CD8-positive, alpha-beta T cell (primary cell): ENCODE measurements at regions of chr11 and their contacts with region 1.

Region 1: DNA sequence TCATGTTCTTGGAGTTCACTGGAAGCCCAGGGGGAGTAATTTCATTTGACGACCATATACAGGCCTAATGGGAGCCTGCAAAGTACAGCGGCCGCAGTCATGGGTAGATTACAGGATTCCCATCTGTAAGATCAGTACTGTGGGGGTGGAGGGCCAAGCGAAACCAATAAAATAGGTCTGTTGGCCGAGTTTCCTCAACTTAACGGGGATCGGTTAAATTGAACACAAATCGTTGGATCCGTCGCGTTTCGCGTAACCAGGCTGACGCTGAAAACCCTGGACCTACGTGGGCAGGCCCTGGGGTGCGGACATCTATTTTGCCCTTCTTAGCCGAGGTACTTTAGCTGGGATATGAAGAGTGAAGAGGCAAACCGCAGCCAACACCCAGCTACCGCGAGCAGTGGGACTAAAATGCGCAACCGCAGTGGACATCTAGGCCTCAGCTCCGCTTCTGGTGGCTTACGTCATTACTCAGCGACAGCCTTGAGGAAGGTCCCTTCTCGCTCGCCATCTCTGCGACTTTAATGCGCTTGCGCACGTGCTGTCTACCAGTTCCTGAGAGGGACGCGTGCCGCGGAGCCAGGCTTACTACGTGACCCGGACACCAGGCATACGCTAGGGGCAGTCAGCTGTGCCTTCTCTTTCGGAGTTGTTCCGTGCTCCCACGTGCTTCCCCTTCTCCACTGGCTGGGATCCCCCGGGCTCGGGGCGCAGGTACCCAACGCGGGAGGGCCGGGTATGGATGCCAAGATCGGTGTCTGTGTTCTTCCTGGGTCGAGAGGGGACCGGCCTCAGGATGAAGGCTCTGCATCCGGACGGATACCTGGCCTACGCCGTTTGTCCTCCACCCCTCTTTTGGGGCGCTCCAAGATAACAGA is at the start of gene NAT10:
- DNase-seq: peak; percentile 93 to 100 (median 98)
- ATAC-seq: peak; percentile 93
- H3K4me3 ChIP-seq: peak within 1 kb of the TSS; percentile 70 to 94
- H3K4me3 Mint-ChIP-seq: peak within 1 kb of the TSS; percentile 97
- H3K27ac ChIP-seq: peak within 1 kb of the TSS; percentile 81 to 90
- H3K27ac Mint-ChIP-seq: peak within 1 kb of the TSS; percentile 99
- H3K4me1 ChIP-seq: peaks cover 27% of the 10 kb centered on the region
- H3K4me1 Mint-ChIP-seq: peaks cover 60% of the 10 kb centered on the region
- H3K27me3 ChIP-seq: no peaks in the 10 kb centered on the region
- H3K27me3 Mint-ChIP-seq: no peaks in the 10 kb centered on the region
- CTCF ChIP-seq: no peak
- total RNA-seq, gene NAT10: 51.1 to 59.6 TPM

Region 2: GRCh38 chr11:33039274-33040032 is 1065.9 kb before region 1 on chr11 and contains the start of gene TCP11L1:
- CTCF ChIA-PET with region 1: no interaction called
- POLR2A ChIA-PET with region 1: no interaction called
- intact Hi-C with region 1: loop called in 1 of 2 experiments (anchors 10 kb)
- DNase-seq: peak; percentile 60 to 89 (median 83)
- ATAC-seq: peak; percentile 81
- H3K4me3 ChIP-seq: peak within 1 kb of the TSS; percentile 98
- H3K4me3 Mint-ChIP-seq: peak within 1 kb of the TSS; percentile 95
- H3K27ac ChIP-seq: peak within 1 kb of the TSS; percentile 71 to 86
- H3K27ac Mint-ChIP-seq: peak within 1 kb of the TSS; percentile 91
- H3K4me1 ChIP-seq: peaks cover 10% of the 10 kb centered on the region
- H3K4me1 Mint-ChIP-seq: peaks cover 20% of the 10 kb centered on the region
- H3K27me3 ChIP-seq: no peaks in the 10 kb centered on the region
- H3K27me3 Mint-ChIP-seq: no peaks in the 10 kb centered on the region
- CTCF ChIP-seq: no peak
- total RNA-seq, gene TCP11L1: 10.9 to 12.3 TPM

Region 3: GRCh38 chr11:34068111-34068510 is 37.2 kb before region 1 on chr11:
- CTCF ChIA-PET with region 1: no interaction called
- POLR2A ChIA-PET with region 1: no interaction called
- intact Hi-C with region 1: no loop called
- DNase-seq: no peak
- ATAC-seq: no peak
- H3K4me3 ChIP-seq: no peak overlapping the region
- H3K4me3 Mint-ChIP-seq: no peak overlapping the region
- H3K27ac ChIP-seq: no peak overlapping the region
- H3K27ac Mint-ChIP-seq: peak overlapping the region; percentile 32
- H3K4me1 ChIP-seq: peaks cover 41% of the 10 kb centered on the region
- H3K4me1 Mint-ChIP-seq: peaks cover 76% of the 10 kb centered on the region
- H3K27me3 ChIP-seq: no peaks in the 10 kb centered on the region
- H3K27me3 Mint-ChIP-seq: no peaks in the 10 kb centered on the region
- CTCF ChIP-seq: no peak

Region 4: DNA sequence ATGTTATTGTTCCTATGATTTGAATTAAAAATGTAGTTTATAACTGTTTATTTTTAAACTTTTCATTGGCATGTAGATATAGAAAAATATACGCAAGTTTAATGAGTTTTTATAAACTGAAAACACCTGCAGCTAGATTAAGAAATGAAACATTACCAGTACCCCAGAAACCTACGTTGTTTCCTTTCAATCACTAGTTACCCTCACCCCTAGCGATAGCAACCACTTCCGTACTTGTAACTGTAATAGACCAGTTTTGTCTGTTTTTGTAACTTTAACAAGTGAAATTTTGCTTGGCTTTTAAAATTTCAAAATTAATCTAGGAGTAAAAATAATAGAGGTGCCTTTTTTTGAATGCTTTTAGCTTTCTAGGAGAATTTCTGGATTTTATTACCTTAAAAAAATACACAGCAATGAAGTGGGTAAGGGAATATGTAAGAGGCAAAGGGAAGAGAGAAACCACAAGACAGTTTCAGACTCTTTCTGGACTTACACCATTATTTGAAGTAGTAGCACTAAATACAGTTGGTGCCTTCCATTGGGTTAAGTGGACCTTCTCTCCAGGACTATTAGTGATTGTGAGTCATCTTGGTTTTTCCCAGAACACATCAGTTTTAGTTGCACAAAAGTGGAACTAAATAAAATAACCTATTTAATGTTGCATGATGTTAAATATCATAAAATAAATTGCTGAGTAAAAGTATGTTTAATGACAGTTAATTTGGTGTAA is 18.6 kb before region 1 on chr11:
- CTCF ChIA-PET with region 1: interaction called, 4 read pairs
- POLR2A ChIA-PET with region 1: no interaction called
- intact Hi-C with region 1: loop called in 1 of 2 experiments (anchors 2 kb)
- DNase-seq: peak in 2 of 9 experiments; percentile 21 to 45
- ATAC-seq: no peak
- H3K4me3 ChIP-seq: no peak overlapping the region
- H3K4me3 Mint-ChIP-seq: no peak overlapping the region
- H3K27ac ChIP-seq: no peak overlapping the region
- H3K27ac Mint-ChIP-seq: no peak overlapping the region
- H3K4me1 ChIP-seq: no peaks in the 10 kb centered on the region
- H3K4me1 Mint-ChIP-seq: peaks cover 12% of the 10 kb centered on the region
- H3K27me3 ChIP-seq: no peaks in the 10 kb centered on the region
- H3K27me3 Mint-ChIP-seq: no peaks in the 10 kb centered on the region
- CTCF ChIP-seq: no peak

Region 5: GRCh38 chr11:34149786-34150185 is 44.5 kb after region 1 on chr11:
- CTCF ChIA-PET with region 1: no interaction called
- POLR2A ChIA-PET with region 1: no interaction called
- intact Hi-C with region 1: no loop called
- DNase-seq: peak in 2 of 9 experiments; percentile 26 to 31
- ATAC-seq: peak; percentile 52
- H3K4me3 ChIP-seq: no peak overlapping the region
- H3K4me3 Mint-ChIP-seq: no peak overlapping the region
- H3K27ac ChIP-seq: no peak overlapping the region
- H3K27ac Mint-ChIP-seq: no peak overlapping the region
- H3K4me1 ChIP-seq: no peaks in the 10 kb centered on the region
- H3K4me1 Mint-ChIP-seq: peaks cover 6% of the 10 kb centered on the region
- H3K27me3 ChIP-seq: no peaks in the 10 kb centered on the region
- H3K27me3 Mint-ChIP-seq: no peaks in the 10 kb centered on the region
- CTCF ChIP-seq: no peak

Region 6: DNA sequence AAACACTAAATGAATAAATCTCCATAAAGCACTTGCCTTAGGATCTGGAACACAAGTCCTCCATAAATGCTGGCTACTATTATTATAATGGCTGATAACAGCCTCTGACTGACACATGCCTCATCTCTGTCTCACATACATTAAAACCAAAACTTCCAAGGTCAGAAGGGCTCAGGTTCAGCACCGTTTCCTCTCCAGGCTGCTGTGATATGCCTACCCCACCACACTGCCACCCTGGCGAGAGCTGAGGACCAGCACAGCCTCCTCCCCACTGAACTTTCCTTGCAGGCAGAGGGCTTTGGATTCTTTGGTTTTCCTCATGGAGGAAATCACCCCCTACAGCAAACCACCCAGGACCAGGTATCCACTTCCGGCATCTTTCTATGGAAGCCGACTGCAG is 139.7 kb after region 1 on chr11:
- CTCF ChIA-PET with region 1: no interaction called
- POLR2A ChIA-PET with region 1: no interaction called
- intact Hi-C with region 1: loop called in 1 of 2 experiments (anchors 5 kb)
- DNase-seq: no peak
- ATAC-seq: no peak
- H3K4me3 ChIP-seq: no peak overlapping the region
- H3K4me3 Mint-ChIP-seq: no peak overlapping the region
- H3K27ac ChIP-seq: no peak overlapping the region
- H3K27ac Mint-ChIP-seq: no peak overlapping the region
- H3K4me1 ChIP-seq: peaks cover 27% of the 10 kb centered on the region
- H3K4me1 Mint-ChIP-seq: peaks cover 44% of the 10 kb centered on the region
- H3K27me3 ChIP-seq: no peaks in the 10 kb centered on the region
- H3K27me3 Mint-ChIP-seq: no peaks in the 10 kb centered on the region
- CTCF ChIP-seq: no peak

Region 7: DNA sequence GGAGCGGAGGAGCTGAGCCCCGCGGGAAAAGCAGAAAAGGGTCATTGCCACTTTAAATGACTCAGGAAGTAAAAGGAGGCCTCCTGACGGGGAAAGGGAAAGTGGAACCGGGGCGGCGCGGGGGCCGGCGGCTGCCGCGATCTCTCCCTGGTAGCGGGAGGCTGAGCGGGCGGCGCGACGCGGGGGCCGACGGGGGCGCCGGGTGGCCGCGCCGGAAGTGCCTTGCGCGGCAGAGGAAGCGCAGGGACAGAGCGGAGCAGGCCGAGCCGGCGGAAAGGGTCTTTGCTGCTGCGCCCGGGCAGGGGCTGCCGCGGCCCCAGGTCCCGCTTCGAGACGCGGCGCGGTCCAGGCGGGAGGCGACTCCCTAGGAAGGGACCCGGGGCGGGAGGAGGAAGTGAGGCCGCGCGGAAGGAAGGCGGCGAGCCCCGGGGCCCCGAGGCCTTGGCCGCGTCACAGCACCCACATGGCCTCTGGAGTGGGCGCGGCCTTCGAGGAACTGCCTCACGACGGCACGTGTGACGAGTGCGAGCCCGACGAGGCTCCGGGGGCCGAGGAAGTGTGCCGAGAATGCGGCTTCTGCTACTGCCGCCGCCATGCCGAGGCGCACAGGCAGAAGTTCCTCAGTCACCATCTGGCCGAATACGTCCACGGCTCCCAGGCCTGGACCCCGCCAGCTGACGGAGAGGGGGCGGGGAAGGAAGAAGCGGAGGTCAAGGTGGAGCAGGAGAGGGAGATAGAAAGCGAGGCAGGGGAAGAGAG is 1557.5 kb after region 1 on chr11 and contains the start of gene TRIM44:
- CTCF ChIA-PET with region 1: no interaction called
- POLR2A ChIA-PET with region 1: no interaction called
- intact Hi-C with region 1: loop called in 1 of 2 experiments (anchors 10 kb)
- DNase-seq: peak; percentile 57 to 89 (median 79)
- ATAC-seq: peak; percentile 81
- H3K4me3 ChIP-seq: peak within 1 kb of the TSS; percentile 91 to 97
- H3K4me3 Mint-ChIP-seq: peak within 1 kb of the TSS; percentile 96
- H3K27ac ChIP-seq: peak within 1 kb of the TSS; percentile 84 to 85
- H3K27ac Mint-ChIP-seq: peak within 1 kb of the TSS; percentile 97
- H3K4me1 ChIP-seq: peaks cover 23% of the 10 kb centered on the region
- H3K4me1 Mint-ChIP-seq: peaks cover 47% of the 10 kb centered on the region
- H3K27me3 ChIP-seq: peaks cover 0 to 4% of the 10 kb centered on the region in 2 experiments
- H3K27me3 Mint-ChIP-seq: no peaks in the 10 kb centered on the region
- CTCF ChIP-seq: no peak
- total RNA-seq, gene TRIM44: 25.7 to 29.5 TPM